ENCODE measurements at regions of chr19 and their contacts with region 1.

Region 1: DNA sequence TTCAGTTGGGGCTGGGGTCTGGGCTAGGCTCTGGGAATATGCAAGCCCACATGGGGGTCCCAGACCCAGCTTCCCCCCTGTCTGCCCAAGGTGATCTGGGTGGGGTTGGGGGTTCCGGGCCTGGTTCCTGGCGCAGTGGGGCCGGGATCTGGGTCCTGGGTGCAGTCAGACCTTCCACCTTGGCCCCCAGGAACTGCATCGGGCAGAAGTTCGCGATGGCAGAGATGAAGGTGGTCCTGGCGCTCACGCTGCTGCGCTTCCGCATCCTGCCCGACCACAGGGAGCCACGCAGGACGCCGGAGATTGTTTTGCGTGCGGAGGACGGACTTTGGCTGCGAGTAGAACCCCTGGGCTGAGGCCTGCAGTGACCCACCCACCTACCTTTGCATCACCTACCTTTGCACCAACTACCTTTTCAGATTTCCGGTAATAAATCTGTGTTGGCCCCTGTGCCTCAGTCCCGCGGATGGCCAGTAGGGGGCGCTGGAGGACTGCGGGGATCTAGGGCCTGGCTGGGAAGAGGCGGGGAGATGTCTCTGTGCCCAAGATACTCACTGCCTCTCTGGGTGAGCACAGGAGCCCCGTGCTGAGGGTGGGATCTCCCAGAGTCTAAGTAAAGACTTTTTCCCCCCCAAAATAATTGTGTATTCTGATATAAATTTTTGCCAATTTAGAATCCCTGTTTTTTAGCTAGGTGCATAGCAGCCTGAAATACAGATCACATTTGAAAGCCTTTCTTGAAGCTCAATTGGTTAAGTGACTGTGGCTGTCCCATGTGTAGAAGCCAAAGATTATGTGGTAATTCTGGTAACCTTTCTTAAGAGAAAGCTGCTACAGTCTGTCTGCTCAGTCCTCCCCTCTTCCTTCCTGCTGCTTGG is 11.5 kb upstream of the CYP4F3 start:
- DNase-seq: peak; percentile 71 to 89 (median 77)
- ATAC-seq: peak; percentile 78 to 90 (median 90)
- H3K4me3 ChIP-seq: no peak overlapping the region
- H3K27ac ChIP-seq: no peak overlapping the region
- H3K4me1 ChIP-seq: peaks cover 0 to 10% (median 0%) of the 10 kb centered on the region in 12 donors
- H3K27me3 ChIP-seq: peaks cover 0 to 45% (median 6%) of the 10 kb centered on the region in 9 donors
- CTCF ChIP-seq: peak; percentile 87 to 97 (median 96)
- POLR2A ChIP-seq: no peak

Region 2: DNA sequence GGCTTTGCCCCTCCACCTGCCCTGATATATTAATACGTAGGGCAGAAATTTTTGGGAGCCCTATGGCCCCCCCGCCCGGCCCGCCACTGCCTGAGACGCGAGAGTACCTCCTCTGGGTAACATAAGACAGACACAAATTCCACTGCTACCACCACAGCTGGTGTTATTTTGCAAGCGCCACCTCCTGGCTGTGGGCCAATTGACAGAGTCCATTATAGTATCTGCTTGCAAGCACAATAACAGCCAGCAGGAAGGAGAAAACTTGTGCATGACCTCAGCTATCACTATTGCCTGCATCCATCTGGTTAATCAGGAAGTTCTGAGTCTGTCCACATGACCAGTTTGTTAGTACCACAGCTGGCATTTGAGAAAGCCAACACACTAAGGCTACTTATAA is 73.3 kb after region 1 on chr19:
- intact Hi-C with region 1: no loop called
- DNase-seq: peak; percentile 68 to 92 (median 80)
- ATAC-seq: peak; percentile 87 to 91 (median 88)
- H3K4me3 ChIP-seq: no peak overlapping the region
- H3K27ac ChIP-seq: no peak overlapping the region
- H3K4me1 ChIP-seq: peaks cover 0 to 19% (median 11%) of the 10 kb centered on the region in 12 donors
- H3K27me3 ChIP-seq: no peaks in the 10 kb centered on the region
- CTCF ChIP-seq: peak in 1 of 12 donors; percentile 8
- POLR2A ChIP-seq: no peak

Region 3: DNA sequence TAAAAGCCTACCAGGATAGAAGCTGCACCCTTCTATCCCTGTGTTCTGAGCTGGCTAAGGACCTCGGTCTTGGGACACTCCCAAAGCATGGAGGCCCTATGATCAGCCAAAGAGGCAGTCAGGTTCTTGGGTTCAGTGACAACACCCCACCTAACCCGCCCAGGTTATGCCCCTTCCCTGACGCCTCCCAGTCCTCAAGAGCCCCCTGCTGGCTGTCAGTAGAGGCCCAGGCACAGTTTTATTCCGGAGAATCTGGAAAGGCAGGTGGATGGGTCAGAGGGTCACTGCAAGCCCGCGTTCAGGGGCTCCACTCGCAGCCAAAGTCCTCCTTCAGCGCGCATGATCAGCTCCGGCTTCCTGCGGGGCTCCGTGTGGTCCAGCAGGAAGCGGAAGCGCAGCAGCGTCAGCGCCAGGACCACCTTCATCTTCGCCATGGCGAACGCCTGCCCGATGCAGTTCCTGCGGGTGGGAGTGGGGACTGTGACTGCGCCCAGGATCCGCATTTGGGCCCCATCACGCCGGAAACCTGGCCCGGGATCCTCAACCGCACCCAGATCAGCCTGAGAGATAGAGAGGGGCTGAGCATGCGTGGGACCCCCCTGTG is 130.8 kb after region 1 on chr19:
- intact Hi-C with region 1: loop called in 1 of 10 experiments (anchors 1 kb)
- DNase-seq: no peak
- ATAC-seq: no peak
- H3K4me3 ChIP-seq: no peak overlapping the region
- H3K27ac ChIP-seq: no peak overlapping the region
- H3K4me1 ChIP-seq: no peaks in the 10 kb centered on the region
- H3K27me3 ChIP-seq: peaks cover 0 to 31% (median 0%) of the 10 kb centered on the region in 9 donors
- CTCF ChIP-seq: peak in 5 of 12 donors; percentile 11 to 23 (median 12)
- POLR2A ChIP-seq: no peak

Region 4: DNA sequence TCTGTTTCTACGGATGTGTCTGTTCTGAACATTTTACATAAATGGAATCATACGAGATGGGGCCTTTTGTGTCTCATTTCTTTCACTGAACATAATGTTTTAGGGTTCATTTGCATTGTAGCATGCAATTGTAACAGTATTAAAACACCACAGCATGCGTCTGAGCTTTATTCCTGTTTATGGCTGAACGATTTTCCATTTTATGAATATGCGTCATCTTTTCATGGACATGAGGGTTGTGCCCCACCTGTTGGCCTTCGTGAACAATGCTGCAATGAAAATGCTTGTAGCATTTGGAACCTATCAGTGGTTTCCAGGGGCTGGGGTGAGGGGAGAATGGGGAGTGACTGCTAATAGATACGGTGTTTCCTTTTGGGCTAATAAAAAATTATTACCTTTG is 181.1 kb after region 1 on chr19:
- intact Hi-C with region 1: loop called (anchors 1 to 10 kb)
- DNase-seq: peak in 1 of 5 donors; percentile 7
- ATAC-seq: peak in 1 of 4 donors; percentile 32
- H3K4me3 ChIP-seq: no peak overlapping the region
- H3K27ac ChIP-seq: no peak overlapping the region
- H3K4me1 ChIP-seq: no peaks in the 10 kb centered on the region
- H3K27me3 ChIP-seq: peaks cover 0 to 28% (median 0%) of the 10 kb centered on the region in 9 donors
- CTCF ChIP-seq: peak; percentile 13 to 58 (median 43)
- POLR2A ChIP-seq: no peak

Region 5: DNA sequence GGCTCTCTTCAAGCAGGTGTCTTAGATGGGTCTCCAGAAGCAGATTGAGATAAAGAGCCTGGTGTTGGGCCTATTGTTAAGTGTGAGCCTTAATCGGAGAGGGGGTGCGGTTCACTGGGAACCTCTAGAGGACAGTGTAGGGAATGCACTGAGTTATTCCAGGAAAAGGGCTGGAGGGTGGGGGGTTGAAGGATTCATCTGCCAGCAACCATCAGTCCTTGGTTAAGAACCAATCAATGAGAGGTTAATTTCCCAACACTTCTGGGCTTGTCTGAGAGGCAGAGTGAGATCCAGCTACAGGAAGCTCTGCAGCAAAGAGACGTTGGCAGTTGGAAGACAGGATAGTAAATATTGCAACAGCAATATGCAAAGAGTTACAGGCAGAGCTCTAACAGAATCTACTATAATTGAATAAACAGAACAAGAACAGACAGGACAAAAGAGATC is 239.9 kb after region 1 on chr19:
- intact Hi-C with region 1: loop called (anchors 1 to 10 kb)
- DNase-seq: no peak
- ATAC-seq: peak in 2 of 4 donors; percentile 64 to 75
- H3K4me3 ChIP-seq: no peak overlapping the region
- H3K27ac ChIP-seq: no peak overlapping the region
- H3K4me1 ChIP-seq: no peaks in the 10 kb centered on the region
- H3K27me3 ChIP-seq: peaks cover 0 to 46% (median 9%) of the 10 kb centered on the region in 9 donors
- CTCF ChIP-seq: peak; percentile 47 to 62 (median 55)
- POLR2A ChIP-seq: no peak

Region 6: GRCh38 chr19:16185123-16185767 is 556.0 kb after region 1 on chr19 and contains the start of gene FAM32A:
- intact Hi-C with region 1: loop called (anchors 1 to 5 kb)
- DNase-seq: peak; percentile 99
- ATAC-seq: peak; percentile 94 to 99 (median 98)
- H3K4me3 ChIP-seq: peak within 1 kb of the TSS; percentile 66 to 99 (median 91)
- H3K27ac ChIP-seq: peak within 1 kb of the TSS; percentile 72 to 92 (median 82)
- H3K4me1 ChIP-seq: peaks cover 3 to 41% (median 16%) of the 10 kb centered on the region in 12 donors
- H3K27me3 ChIP-seq: peaks cover 0 to 9% (median 0%) of the 10 kb centered on the region in 9 donors
- CTCF ChIP-seq: peak in 10 of 12 donors; percentile 7 to 51 (median 25)
- POLR2A ChIP-seq: peak in 1 of 2 donors; percentile 74
- total RNA-seq, gene FAM32A: 32.0 to 71.8 (median 37.5) TPM